ENCODE measurements at regions of chr5 and their contacts with region 1.

Region 1: DNA sequence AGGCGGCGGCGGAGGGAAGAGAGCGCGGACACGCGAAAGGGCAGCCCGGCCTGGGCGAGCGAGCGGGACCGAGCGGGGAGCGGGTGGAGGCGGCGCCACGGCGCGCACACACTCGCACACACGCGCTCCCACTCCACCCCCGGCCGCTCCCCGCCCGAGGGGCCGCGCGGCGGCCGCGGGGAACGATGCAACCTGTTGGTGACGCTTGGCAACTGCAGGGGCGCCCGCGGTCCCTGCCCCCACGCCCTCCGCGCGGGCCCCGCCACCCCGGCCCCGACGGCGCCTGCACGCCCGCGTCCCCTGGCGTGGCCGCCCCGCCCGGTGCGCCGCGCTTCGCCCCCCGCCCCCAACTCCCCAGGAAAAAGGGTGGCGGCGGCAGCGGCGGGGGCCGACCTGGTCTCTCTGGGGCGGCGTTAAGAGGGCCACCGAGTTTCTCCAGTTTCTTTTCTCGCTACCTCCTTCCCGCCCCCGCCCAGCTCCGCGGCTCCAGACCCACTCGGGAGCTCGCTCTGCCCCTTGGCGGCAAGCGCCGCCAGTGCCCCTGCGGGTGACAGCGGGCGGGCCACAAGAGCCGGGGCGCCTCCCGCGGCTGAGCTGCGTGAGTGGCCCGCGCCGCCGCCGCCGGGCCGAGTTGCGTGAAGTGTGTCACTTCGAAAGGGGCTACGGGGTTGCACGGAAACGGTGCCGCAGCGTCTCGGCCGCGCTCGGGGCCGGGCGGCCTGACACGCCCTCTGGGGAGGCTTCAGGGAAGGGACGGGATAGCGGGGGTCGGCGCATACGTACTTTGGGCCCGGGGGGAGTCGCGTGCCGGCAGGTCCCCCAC is at the start of gene NR3C1:
- DNase-seq: peak; percentile 84 to 89 (median 86)
- H3K4me3 ChIP-seq: peak within 1 kb of the TSS; percentile 64 to 98 (median 88)
- H3K4me3 Mint-ChIP-seq: peak within 1 kb of the TSS; percentile 90 to 93
- H3K27ac ChIP-seq: peak within 1 kb of the TSS; percentile 96 to 98
- H3K27ac Mint-ChIP-seq: peak within 1 kb of the TSS; percentile 98 to 99 (median 99)
- H3K4me1 ChIP-seq: peaks cover 28 to 46% of the 10 kb centered on the region in 2 donors
- H3K4me1 Mint-ChIP-seq: peaks cover 35% of the 10 kb centered on the region
- H3K27me3 ChIP-seq: no peaks in the 10 kb centered on the region
- H3K27me3 Mint-ChIP-seq: no peaks in the 10 kb centered on the region
- CTCF ChIP-seq: peak; percentile 64
- polyA plus RNA-seq, gene NR3C1: 25.4 to 82.8 (median 75.1) TPM

Region 2: DNA sequence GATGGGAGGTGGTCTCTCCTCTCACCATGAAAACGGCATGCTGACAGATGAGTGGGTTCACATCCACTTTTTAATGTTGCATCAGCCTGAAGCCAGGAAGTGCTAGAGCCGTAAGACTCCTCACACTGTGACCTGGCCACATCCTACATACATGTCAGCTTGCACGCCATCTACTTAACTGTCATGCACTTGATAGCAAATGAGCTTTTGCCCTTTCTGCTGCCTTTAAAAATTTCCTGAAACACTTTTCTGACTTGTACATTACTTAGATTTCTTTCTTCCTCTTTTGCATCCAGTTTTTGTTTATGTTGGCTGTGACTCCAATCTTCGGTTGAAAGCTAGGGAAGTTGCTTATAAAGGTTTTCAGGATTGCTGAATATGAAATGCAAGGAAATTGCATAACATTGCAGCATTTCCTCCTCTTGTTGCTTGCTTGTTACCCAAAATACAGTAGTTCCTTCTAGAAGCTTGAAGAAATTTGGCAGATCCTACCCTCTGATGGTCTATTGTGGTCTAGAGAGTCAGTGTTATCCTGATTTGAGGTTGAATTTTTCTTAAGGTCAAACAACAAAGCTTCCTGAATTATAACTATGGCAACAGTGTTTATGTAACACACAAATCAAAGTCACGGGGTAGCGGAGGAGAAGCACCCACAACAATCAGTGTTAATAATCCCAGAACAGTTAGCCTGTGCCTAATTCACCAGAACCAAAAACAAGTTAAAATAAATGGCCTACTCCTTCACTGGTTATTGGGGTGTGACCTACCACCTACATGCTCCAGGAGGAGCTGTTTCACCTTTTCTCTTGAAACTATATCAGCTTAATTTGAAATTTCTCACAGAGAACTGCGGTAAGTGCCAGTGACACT is 401.1 kb before region 1 on chr5:
- intact Hi-C with region 1: loop called in 1 of 2 experiments (anchors 10 kb)
- DNase-seq: peak; percentile 93 to 100 (median 98)
- H3K4me3 ChIP-seq: peak overlapping the region in 1 of 3 experiments; percentile 25
- H3K4me3 Mint-ChIP-seq: peak overlapping the region; percentile 54 to 78
- H3K27ac ChIP-seq: peak overlapping the region; percentile 98 to 100
- H3K27ac Mint-ChIP-seq: peak overlapping the region; percentile 97 to 99 (median 99)
- H3K4me1 ChIP-seq: peaks cover 83 to 92% of the 10 kb centered on the region in 2 donors
- H3K4me1 Mint-ChIP-seq: peaks cover 92% of the 10 kb centered on the region
- H3K27me3 ChIP-seq: no peaks in the 10 kb centered on the region
- H3K27me3 Mint-ChIP-seq: no peaks in the 10 kb centered on the region
- CTCF ChIP-seq: peak; percentile 36

Region 3: DNA sequence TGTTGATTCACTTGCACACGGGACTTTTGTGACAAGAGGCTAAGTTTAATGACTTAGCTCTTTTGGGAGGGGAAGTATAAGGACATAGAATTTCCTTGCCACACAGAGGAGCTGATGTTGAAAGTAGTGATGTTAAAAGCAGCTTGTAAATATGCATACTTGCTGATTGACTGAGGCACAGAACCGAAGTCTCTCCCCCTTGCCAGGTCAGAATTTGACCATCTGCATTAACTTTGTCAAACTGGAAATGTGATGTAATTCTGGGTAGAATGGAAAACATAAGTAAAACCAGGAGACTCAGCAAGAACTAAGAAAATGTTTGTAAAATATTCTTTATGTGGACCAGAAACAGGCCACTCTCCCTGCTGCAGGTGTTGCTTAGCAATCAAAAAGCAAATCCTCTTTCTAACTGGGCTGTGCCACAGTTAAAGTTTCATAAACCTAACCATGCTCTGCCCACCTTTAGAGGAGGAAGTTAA is 284.5 kb before region 1 on chr5:
- intact Hi-C with region 1: loop called in 1 of 2 experiments (anchors 2 kb)
- DNase-seq: peak; percentile 74 to 88 (median 86)
- H3K4me3 ChIP-seq: peak overlapping the region in 1 of 3 experiments; percentile 9
- H3K4me3 Mint-ChIP-seq: peak overlapping the region in 1 of 2 donors; percentile 71
- H3K27ac ChIP-seq: peak overlapping the region; percentile 92 to 97
- H3K27ac Mint-ChIP-seq: peak overlapping the region; percentile 95 to 100 (median 99)
- H3K4me1 ChIP-seq: peaks cover 37 to 39% of the 10 kb centered on the region in 2 donors
- H3K4me1 Mint-ChIP-seq: peaks cover 45% of the 10 kb centered on the region
- H3K27me3 ChIP-seq: no peaks in the 10 kb centered on the region
- H3K27me3 Mint-ChIP-seq: no peaks in the 10 kb centered on the region
- CTCF ChIP-seq: no peak

Region 4: DNA sequence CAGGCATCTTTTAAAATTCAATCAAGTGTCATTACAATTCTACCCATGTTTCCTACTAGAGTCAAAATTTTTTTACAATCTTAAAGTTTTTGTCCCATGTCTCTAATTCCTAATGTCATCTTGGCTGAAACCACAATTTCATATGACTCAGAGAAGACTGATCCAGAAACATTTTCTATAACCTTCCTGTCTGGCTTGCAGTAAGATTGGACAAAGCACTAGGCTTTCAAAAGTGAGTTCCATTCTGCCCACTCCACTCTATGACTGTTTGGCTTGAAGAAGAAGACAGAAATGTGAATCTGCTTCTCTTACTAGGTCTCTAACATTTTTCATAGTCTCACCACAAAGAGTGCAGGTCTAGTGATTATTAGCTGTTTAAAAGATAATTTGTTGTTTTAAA is 89.1 kb before region 1 on chr5:
- intact Hi-C with region 1: loop called in 1 of 2 experiments (anchors 5 kb)
- DNase-seq: peak; percentile 8 to 58 (median 37)
- H3K4me3 ChIP-seq: no peak overlapping the region
- H3K4me3 Mint-ChIP-seq: no peak overlapping the region
- H3K27ac ChIP-seq: peak overlapping the region in 1 of 2 donors; percentile 34
- H3K27ac Mint-ChIP-seq: peak overlapping the region in 5 of 7 donors; percentile 9 to 80 (median 27)
- H3K4me1 ChIP-seq: peaks cover 14 to 20% of the 10 kb centered on the region in 2 donors
- H3K4me1 Mint-ChIP-seq: peaks cover 47% of the 10 kb centered on the region
- H3K27me3 ChIP-seq: no peaks in the 10 kb centered on the region
- H3K27me3 Mint-ChIP-seq: no peaks in the 10 kb centered on the region
- CTCF ChIP-seq: no peak

Region 5: DNA sequence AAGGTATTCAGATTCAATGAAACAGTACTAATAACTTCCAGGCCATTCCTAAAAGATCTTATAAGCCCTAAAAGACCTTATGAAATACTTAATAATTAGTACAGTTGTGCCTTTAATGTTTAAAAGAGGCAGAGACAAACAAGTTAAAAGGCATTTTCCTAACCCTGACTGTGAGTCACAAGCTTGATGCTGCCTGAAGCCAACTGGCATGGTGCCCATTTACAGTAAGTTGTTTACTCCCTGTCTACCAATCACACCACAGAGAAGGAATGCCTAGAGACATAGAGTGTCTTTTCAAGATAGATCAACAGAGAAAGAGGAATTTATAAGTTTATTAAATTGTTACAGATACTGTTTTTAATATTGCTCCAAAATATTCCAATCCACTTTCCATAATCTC is 48.1 kb before region 1 on chr5:
- intact Hi-C with region 1: loop called in 1 of 2 experiments (anchors 10 kb)
- DNase-seq: peak; percentile 76 to 85 (median 84)
- H3K4me3 ChIP-seq: no peak overlapping the region
- H3K4me3 Mint-ChIP-seq: no peak overlapping the region
- H3K27ac ChIP-seq: peak overlapping the region in 1 of 2 donors; percentile 55
- H3K27ac Mint-ChIP-seq: peak overlapping the region in 3 of 7 donors; percentile 42 to 82 (median 56)
- H3K4me1 ChIP-seq: peaks cover 40 to 63% of the 10 kb centered on the region in 2 donors
- H3K4me1 Mint-ChIP-seq: peaks cover 66% of the 10 kb centered on the region
- H3K27me3 ChIP-seq: no peaks in the 10 kb centered on the region
- H3K27me3 Mint-ChIP-seq: no peaks in the 10 kb centered on the region
- CTCF ChIP-seq: no peak

Region 6: DNA sequence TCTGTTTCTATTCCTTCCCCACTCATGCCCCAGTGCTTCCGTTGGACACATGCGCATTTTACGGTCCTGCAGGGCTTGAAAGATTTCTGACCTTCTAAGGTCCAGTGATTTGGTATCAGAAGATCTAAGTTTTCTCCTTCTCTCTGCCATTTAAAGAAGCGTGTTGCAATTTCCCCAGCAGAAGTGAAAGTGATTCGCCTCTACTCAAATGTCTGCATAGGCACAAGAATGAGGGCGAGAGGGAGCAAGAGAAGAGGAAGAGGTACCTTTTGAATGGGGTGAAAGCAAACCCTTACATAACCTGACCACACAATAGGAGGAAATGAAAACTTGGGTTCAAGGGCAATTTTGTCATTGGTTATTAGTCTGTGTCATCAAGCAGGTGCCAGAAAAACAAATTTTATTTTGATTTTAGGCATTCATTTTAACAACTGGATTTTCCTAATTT is 31.4 kb after region 1 on chr5:
- intact Hi-C with region 1: loop called (anchors 2 to 5 kb)
- DNase-seq: peak; percentile 88 to 94 (median 93)
- H3K4me3 ChIP-seq: peak overlapping the region; percentile 26 to 88 (median 75)
- H3K4me3 Mint-ChIP-seq: peak overlapping the region; percentile 85 to 98
- H3K27ac ChIP-seq: peak overlapping the region; percentile 80 to 96
- H3K27ac Mint-ChIP-seq: peak overlapping the region; percentile 99 to 100 (median 100)
- H3K4me1 ChIP-seq: peaks cover 52 to 68% of the 10 kb centered on the region in 2 donors
- H3K4me1 Mint-ChIP-seq: peaks cover 69% of the 10 kb centered on the region
- H3K27me3 ChIP-seq: no peaks in the 10 kb centered on the region
- H3K27me3 Mint-ChIP-seq: peaks cover 0 to 2% (median 2%) of the 10 kb centered on the region in 3 donors
- CTCF ChIP-seq: no peak

Region 7: DNA sequence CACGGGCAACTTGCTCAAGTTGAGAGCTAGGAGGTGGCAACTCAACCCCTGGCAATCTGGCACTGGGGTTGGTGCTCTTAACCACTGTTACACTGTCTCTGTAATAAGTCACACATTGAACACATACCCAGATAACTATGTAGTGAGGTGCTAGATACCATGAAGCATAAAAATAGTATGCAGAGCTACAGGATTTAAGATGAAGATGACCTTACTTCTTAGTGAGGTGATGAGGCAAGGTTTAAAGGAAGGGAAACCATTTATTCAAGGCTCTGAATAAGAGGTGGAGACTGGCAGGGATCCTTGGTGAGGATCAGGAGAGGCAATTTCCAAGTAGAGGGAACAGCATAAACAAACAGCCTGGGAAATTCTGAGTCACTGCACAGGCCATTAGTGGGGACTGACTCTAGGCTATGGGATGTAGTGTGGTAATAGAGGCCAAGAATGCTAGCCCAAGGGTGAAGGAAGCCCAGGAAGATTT is 67.3 kb after region 1 on chr5:
- intact Hi-C with region 1: no loop called
- DNase-seq: no peak
- H3K4me3 ChIP-seq: no peak overlapping the region
- H3K4me3 Mint-ChIP-seq: no peak overlapping the region
- H3K27ac ChIP-seq: no peak overlapping the region
- H3K27ac Mint-ChIP-seq: no peak overlapping the region
- H3K4me1 ChIP-seq: no peaks in the 10 kb centered on the region
- H3K4me1 Mint-ChIP-seq: no peaks in the 10 kb centered on the region
- H3K27me3 ChIP-seq: no peaks in the 10 kb centered on the region
- H3K27me3 Mint-ChIP-seq: peaks cover 0 to 2% (median 0%) of the 10 kb centered on the region in 3 donors
- CTCF ChIP-seq: no peak

Region 8: GRCh38 chr5:143557061-143557818 is 153.4 kb after region 1 on chr5:
- intact Hi-C with region 1: loop called in 1 of 2 experiments (anchors 10 kb)
- DNase-seq: peak; percentile 61 to 83 (median 75)
- H3K4me3 ChIP-seq: no peak overlapping the region
- H3K4me3 Mint-ChIP-seq: no peak overlapping the region
- H3K27ac ChIP-seq: peak overlapping the region in 1 of 2 donors; percentile 54
- H3K27ac Mint-ChIP-seq: peak overlapping the region; percentile 71 to 89 (median 87)
- H3K4me1 ChIP-seq: peaks cover 29 to 51% of the 10 kb centered on the region in 2 donors
- H3K4me1 Mint-ChIP-seq: peaks cover 37% of the 10 kb centered on the region
- H3K27me3 ChIP-seq: no peaks in the 10 kb centered on the region
- H3K27me3 Mint-ChIP-seq: no peaks in the 10 kb centered on the region
- CTCF ChIP-seq: no peak